ENCODE measurements at regions of chr2 and their contacts with region 1.

Region 1: GRCh38 chr2:170928824-170929685 is at the start of gene GORASP2:
- DNase-seq: peak; percentile 95 to 98
- H3K4me3 ChIP-seq: peak within 1 kb of the TSS; percentile 80 to 92 (median 88)
- H3K27ac ChIP-seq: peak within 1 kb of the TSS; percentile 95
- H3K4me1 ChIP-seq: peaks cover 5 to 18% (median 6%) of the 10 kb centered on the region in 4 experiments; a peak in 6 of 7 replicates
- H3K27me3 ChIP-seq: no peaks in the 10 kb centered on the region
- CTCF ChIP-seq: peak; percentile 70 to 89 (median 76)
- EP300 ChIP-seq: peak in 1 of 2 experiments; percentile 80; a peak in 1 of 3 replicates
- POLR2A ChIP-seq: peak; percentile 84 to 91
- RAD21 ChIP-seq: peak; percentile 35 to 57; a peak in 3 of 4 replicates
- total RNA-seq, gene GORASP2: 81.3 and 86.8 TPM in 2 replicates

Region 2: DNA sequence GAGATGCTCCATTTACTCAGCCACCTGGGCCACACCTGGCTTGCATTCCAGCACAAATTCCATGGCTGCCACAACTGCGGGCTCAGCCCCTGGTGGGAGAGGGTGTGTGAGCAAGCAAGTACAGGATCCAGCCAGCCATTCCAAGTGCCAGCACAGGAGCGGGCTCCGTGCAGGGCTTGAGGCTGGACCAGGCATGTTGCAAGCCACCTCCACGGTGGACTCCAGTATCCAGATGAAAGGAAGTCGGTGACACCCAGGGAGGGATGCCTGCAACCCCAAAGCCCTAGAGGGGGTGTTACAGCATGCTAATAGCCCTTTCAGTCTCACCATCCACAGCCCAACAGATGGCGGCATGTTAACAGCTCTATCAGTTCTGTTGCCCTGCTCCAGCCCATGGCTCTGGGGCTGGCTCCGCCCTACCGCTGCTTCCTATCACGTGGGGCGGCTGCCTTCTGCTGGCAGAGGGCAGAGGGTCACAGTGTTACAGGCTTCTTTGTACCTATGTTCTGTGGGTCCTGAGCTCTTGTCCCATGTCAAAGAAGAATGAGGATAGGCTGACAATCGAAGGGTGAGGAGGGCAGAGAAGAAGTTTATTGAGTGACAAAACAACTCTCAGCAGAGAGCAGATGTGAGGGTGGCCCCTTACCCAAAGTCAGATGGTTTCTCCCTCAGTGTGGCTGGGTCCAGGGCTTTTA is 11.7 kb before region 1 on chr2:
- CTCF ChIA-PET with region 1: interaction called, 12 read pairs
- POLR2A ChIA-PET with region 1: interaction called, 12 read pairs
- DNase-seq: no peak
- H3K4me3 ChIP-seq: peak overlapping the region in 3 of 4 experiments; percentile 29 to 53 (median 40); a peak in 6 of 8 replicates
- H3K27ac ChIP-seq: peak overlapping the region; percentile 97
- H3K4me1 ChIP-seq: peaks cover 3 to 12% (median 7%) of the 10 kb centered on the region in 4 experiments; a peak in 4 of 7 replicates
- H3K27me3 ChIP-seq: no peaks in the 10 kb centered on the region
- CTCF ChIP-seq: peak in 1 of 3 experiments; percentile 21; a peak in 2 of 4 replicates
- EP300 ChIP-seq: peak in 1 of 2 experiments; percentile 92; a peak in 2 of 3 replicates
- POLR2A ChIP-seq: peak in 1 of 2 experiments; percentile 91; a peak in 2 of 3 replicates
- RAD21 ChIP-seq: peak; percentile 27 to 32

Region 3: DNA sequence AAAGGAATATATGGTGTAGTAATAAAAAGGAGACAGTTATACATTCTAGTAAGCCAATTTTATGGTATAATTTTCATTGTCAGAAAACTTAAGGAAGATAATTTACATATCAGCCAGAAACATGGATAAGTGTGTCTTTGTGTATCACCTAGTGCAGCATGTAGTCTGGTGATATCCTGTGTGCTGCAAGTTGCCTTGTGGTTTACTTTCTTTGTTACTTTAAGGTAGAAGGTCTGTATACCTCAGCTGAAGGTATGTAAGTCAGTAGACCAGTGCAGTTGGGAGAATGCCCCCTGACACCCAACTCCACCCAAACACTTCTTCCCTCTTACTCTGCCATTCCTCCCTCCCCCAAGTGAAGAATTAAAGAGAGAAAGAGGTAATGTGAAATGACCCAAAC is 11.0 kb after region 1 on chr2:
- CTCF ChIA-PET with region 1: interaction called, 7 read pairs
- POLR2A ChIA-PET with region 1: interaction called, 22 read pairs
- DNase-seq: no peak
- H3K4me3 ChIP-seq: no peak overlapping the region
- H3K27ac ChIP-seq: no peak overlapping the region
- H3K4me1 ChIP-seq: no peaks in the 10 kb centered on the region
- H3K27me3 ChIP-seq: no peaks in the 10 kb centered on the region
- CTCF ChIP-seq: no peak
- EP300 ChIP-seq: no peak
- POLR2A ChIP-seq: no peak
- RAD21 ChIP-seq: no peak

Region 4: GRCh38 chr2:170950221-170950761 is 21.2 kb after region 1 on chr2:
- CTCF ChIA-PET with region 1: interaction called, 8 read pairs
- POLR2A ChIA-PET with region 1: interaction called, 13 read pairs
- DNase-seq: no peak
- H3K4me3 ChIP-seq: no peak overlapping the region
- H3K27ac ChIP-seq: no peak overlapping the region
- H3K4me1 ChIP-seq: no peaks in the 10 kb centered on the region
- H3K27me3 ChIP-seq: no peaks in the 10 kb centered on the region
- CTCF ChIP-seq: no peak
- EP300 ChIP-seq: no peak
- POLR2A ChIP-seq: no peak
- RAD21 ChIP-seq: no peak

Region 5: GRCh38 chr2:171056307-171056706 is 127.3 kb after region 1 on chr2:
- CTCF ChIA-PET with region 1: no interaction called
- POLR2A ChIA-PET with region 1: no interaction called
- DNase-seq: no peak
- H3K4me3 ChIP-seq: no peak overlapping the region
- H3K27ac ChIP-seq: no peak overlapping the region
- H3K4me1 ChIP-seq: no peaks in the 10 kb centered on the region
- H3K27me3 ChIP-seq: no peaks in the 10 kb centered on the region
- CTCF ChIP-seq: no peak
- EP300 ChIP-seq: no peak
- POLR2A ChIP-seq: no peak
- RAD21 ChIP-seq: no peak

Region 6: GRCh38 chr2:171160119-171160955 is 231.3 kb after region 1 on chr2 and contains the start of gene TLK1:
- CTCF ChIA-PET with region 1: no interaction called
- POLR2A ChIA-PET with region 1: no interaction called
- DNase-seq: peak in 1 of 2 experiments; percentile 84
- H3K4me3 ChIP-seq: peak within 1 kb of the TSS; percentile 87 to 100 (median 92)
- H3K27ac ChIP-seq: peak within 1 kb of the TSS; percentile 92
- H3K4me1 ChIP-seq: peaks cover 0 to 3% (median 0%) of the 10 kb centered on the region in 4 experiments; a peak in 3 of 7 replicates
- H3K27me3 ChIP-seq: no peaks in the 10 kb centered on the region
- CTCF ChIP-seq: no peak
- EP300 ChIP-seq: 0 out of 3 replicates have a peak, but pooled peaks of 1 of the 2 experiments have one; percentile 3
- POLR2A ChIP-seq: peak in 1 of 2 experiments; percentile 68; a peak in 2 of 3 replicates
- RAD21 ChIP-seq: peak in 1 of 2 experiments; percentile 45; a peak in 2 of 4 replicates
- total RNA-seq, gene TLK1: 97.4 and 102 TPM in 2 replicates

Measured in H1 (cell line).